ENCODE measurements at regions of chr10 and their contacts with region 1.

Region 1: GRCh38 chr10:45594276-45595106 is 78.1 kb downstream of the ZFAND4 start:
- DNase-seq: peak; percentile 97

Region 2: DNA sequence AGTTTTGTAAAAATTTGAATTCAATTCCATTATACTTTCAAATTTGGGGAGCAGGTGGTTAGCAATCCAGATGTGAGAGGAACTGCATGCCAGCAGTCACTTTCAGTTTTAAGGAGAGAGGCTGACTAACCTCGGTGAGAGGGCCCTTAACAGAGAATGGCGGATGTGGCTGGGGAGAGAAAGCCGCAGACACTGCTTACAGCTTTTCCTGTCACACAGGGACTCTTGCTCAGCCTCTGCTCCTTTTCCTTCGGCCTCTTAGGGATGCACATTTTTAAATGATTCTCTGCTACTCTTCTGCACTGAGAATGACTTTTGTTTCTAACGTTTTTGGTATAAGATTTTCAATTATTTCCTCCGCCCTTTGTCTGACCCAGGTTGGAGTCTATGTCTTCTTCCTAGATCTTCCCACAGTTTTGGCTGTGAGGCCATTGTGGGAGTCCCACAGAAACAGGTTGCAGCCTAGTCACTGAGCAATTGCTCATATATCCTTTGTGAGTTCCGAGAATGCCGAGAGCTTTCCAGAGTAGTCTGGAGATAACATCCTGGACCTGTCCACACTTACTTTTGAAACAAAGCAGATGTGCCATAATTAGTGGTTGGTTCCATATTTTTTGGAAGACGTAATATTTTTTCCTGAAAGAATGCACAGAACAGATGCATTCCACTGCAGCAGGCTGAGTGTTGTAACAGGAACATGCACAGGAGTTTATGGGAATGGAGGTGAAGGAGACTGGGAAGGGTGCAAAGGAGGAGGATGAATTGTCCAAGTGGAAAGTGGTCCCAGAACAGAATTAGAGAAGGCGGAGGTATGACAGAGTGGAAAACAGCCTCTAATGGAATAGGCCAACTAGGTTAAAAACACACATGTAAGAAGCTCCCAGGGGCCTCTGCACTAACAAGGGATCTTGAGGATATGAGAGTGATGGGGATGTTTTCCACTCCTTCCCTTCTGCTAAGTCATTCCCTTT is 1777.9 kb before region 1 on chr10:
- intact Hi-C with region 1: loop called in 1 of 2 experiments (anchors 5 kb)
- DNase-seq: peak; percentile 68

Measured in posterior vena cava (tissue), 2 donors.